Naive thymus-derived CD8-positive, alpha-beta T cell (primary cell): ENCODE measurements at regions of chr6 and their contacts with region 1.

Region 1: GRCh38 chr6:30541515-30542403 is 14.5 kb downstream of the GNL1 start:
- DNase-seq: peak; percentile 64 to 90 (median 79)
- ATAC-seq: peak; percentile 72 to 78
- H3K4me3 Mint-ChIP-seq: peak overlapping the region; percentile 78 to 95 (median 90)
- H3K27ac Mint-ChIP-seq: peak overlapping the region; percentile 82 to 97 (median 93)
- H3K4me1 Mint-ChIP-seq: peaks cover 27 to 36% (median 32%) of the 10 kb centered on the region in 4 donors
- H3K27me3 Mint-ChIP-seq: no peaks in the 10 kb centered on the region

Region 2: GRCh38 chr6:30463651-30464618 is 77.8 kb before region 1 on chr6:
- POLR2A ChIA-PET with region 1: interaction called, 10 read pairs
- DNase-seq: peak in 8 of 10 donors; percentile 31 to 69 (median 52)
- ATAC-seq: peak; percentile 52 to 61
- H3K4me3 Mint-ChIP-seq: peak overlapping the region in 9 of 10 donors; percentile 6 to 91 (median 49)
- H3K27ac Mint-ChIP-seq: no peak overlapping the region
- H3K4me1 Mint-ChIP-seq: peaks cover 16 to 54% (median 44%) of the 10 kb centered on the region in 4 donors
- H3K27me3 Mint-ChIP-seq: peaks cover 62 to 95% (median 72%) of the 10 kb centered on the region in 5 donors

Region 3: DNA sequence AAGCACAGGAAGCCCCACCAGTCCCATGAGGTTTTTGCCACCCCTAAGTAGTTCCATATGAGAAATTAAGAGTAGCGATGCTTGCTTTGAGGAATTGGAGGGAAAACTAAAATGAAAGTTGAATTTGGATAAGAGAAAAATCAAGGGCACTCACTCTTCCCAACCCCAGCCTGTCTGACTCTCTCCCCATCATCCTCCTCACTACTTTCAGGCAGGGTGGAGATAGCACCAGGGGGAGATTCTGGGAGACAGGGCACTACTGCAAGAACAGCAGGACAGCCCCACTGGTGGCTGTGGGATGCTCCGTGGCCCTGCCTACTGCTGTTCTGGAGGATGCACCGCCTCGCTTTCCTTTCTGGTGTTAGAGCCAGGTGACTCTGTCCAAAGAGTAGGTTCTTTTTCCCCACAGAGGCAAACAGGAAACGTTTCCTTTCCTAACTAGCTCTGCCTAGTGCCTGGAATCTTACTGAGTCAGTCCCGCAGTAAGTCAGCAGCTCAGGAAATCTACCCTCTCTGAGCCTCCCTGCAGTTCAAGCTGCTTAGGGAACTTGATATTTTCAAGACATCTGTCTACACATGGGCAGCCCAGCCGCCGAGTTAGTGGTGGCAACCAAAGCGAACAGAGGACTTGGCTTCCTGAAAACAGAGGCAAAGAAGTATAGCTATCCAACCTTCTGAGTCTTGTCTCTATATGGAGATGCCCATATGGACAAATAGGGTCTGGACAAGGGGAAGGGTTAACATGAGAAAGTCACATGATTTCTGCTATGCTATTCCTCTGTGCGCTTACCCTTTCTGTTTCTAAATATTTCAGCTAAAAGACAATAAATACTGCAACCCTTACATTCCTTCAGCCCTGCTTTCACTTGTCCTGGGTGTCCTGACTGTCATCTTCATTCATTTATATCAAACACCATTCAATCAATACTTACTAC is 41.1 kb before region 1 on chr6:
- POLR2A ChIA-PET with region 1: interaction called, 211 read pairs
- DNase-seq: no peak
- ATAC-seq: peak; percentile 67 to 81
- H3K4me3 Mint-ChIP-seq: peak overlapping the region; percentile 73 to 89 (median 82)
- H3K27ac Mint-ChIP-seq: peak overlapping the region in 9 of 10 donors; percentile 73 to 91 (median 89)
- H3K4me1 Mint-ChIP-seq: peaks cover 28 to 53% (median 47%) of the 10 kb centered on the region in 4 donors
- H3K27me3 Mint-ChIP-seq: no peaks in the 10 kb centered on the region

Region 4: DNA sequence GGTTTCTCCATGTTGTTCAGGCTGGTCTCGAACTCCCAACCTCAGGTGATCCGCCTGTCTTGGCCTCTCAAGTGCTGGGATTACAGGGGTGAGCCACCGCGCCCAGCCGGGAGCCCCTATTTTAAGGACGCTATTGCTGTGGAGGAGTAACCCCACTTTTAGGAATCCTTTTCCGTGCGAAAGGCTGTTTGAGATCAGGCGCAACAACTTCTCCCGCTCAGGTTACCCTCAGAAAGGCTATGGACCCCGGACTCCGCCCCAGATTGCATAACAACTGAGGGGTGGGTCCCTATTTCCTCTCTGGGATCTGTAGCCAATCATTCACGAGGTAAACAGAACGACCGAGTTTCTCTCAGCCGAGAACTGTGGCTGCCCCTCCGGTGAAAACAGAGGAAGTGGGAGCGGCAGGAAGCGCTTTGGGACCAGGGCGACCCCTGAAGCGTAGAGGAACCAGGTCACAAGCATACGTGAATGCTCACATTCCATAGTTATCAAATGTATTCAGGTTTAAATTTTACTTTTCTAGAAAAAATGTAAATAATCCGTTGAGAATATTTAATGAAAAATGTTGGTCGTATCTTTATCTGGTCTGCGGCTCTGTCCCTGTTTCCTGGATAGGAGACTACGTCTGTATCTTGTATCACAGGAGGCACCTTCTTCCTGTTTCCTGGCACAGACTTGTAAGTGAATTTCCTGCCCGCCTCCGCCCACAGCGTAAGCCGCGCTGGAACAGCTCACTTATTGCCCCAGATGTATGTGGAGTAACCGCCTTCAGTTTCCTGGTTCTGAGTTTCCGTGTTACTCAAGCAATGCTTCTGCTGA is 25.6 kb before region 1 on chr6:
- POLR2A ChIA-PET with region 1: interaction called, 33 read pairs
- DNase-seq: peak; percentile 71 to 97 (median 91)
- ATAC-seq: peak; percentile 84 to 85
- H3K4me3 Mint-ChIP-seq: peak overlapping the region; percentile 70 to 94 (median 90)
- H3K27ac Mint-ChIP-seq: peak overlapping the region; percentile 96 to 100 (median 99)
- H3K4me1 Mint-ChIP-seq: peaks cover 18 to 80% (median 66%) of the 10 kb centered on the region in 4 donors
- H3K27me3 Mint-ChIP-seq: no peaks in the 10 kb centered on the region

Region 5: GRCh38 chr6:30556066-30556905 is 14.5 kb after region 1 on chr6 and contains the start of gene GNL1:
- POLR2A ChIA-PET with region 1: interaction called, 80 read pairs
- DNase-seq: peak; percentile 97 to 100 (median 99)
- ATAC-seq: peak; percentile 86 to 87
- H3K4me3 Mint-ChIP-seq: peak within 1 kb of the TSS; percentile 87 to 100 (median 99)
- H3K27ac Mint-ChIP-seq: peak within 1 kb of the TSS; percentile 98 to 100 (median 100)
- H3K4me1 Mint-ChIP-seq: peaks cover 25 to 70% (median 56%) of the 10 kb centered on the region in 4 donors
- H3K27me3 Mint-ChIP-seq: peaks cover 0 to 2% (median 0%) of the 10 kb centered on the region in 5 donors
- polyA plus RNA-seq, gene GNL1: 24.7 to 34.1 (median 28.7) TPM

Region 6: DNA sequence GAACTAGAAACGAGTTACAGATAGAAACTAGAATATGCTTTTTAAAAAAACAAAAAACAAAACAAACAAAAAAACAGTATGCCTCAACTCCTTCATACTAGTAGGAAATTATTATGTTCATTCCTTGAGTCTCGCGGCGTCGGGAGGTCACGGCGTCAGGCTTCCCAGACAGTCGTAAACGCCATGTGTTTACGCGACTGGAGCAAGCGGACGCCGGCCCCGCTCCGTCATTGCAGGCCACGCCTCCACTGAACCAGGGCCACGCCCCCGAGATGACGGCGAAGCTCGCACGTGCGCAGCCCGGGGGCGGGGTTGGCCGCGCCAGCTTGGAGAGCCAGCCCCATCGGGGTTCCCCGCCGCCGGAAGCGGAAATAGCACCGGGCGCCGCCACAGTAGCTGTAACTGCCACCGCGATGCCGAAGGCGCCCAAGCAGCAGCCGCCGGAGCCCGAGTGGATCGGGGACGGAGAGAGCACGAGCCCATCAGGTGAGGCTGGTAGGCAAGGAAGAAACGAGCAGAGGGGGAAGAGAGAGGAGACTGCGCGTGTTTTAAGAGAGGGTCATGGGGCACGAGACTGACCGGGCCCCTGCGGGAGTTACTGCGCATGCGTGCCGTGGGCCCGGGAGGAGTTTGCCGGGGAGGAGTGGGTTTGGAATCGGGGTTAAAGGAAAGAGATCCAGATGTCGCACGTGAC is 29.5 kb after region 1 on chr6 and contains the start of gene ABCF1:
- POLR2A ChIA-PET with region 1: interaction called, 19 read pairs
- DNase-seq: peak; percentile 98 to 100 (median 99)
- ATAC-seq: peak; percentile 94
- H3K4me3 Mint-ChIP-seq: peak within 1 kb of the TSS; percentile 91 to 100 (median 100)
- H3K27ac Mint-ChIP-seq: peak within 1 kb of the TSS; percentile 98 to 100 (median 99)
- H3K4me1 Mint-ChIP-seq: peaks cover 45 to 67% (median 62%) of the 10 kb centered on the region in 4 donors
- H3K27me3 Mint-ChIP-seq: no peaks in the 10 kb centered on the region
- polyA plus RNA-seq, gene ABCF1: 19.1 to 43.1 (median 30.5) TPM

Region 7: DNA sequence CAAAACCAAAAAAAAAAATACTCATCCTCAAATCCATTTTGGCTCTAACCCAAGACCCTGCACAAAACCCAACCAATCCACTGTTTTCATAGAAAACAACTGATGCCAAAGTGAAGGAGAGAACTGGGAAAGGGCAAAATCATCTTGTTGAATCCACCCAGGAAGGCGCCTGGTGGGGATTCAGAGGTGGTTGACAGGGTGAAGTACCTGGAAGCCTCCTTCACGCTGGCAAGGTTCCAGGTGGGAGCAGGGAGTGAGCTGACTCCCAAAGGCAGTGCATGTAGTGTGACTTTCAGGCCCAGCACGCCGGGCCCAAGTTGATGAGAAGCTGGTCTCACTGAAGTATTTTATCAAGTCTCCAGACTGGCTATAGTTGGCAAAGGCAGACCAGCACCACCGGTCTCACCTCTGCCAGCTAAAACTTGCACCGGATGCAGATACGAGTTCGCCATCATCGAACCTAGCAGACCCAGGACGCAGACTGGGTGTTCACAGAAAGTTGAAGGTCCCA is 58.7 kb after region 1 on chr6:
- POLR2A ChIA-PET with region 1: interaction called, 56 read pairs
- DNase-seq: no peak
- ATAC-seq: no peak
- H3K4me3 Mint-ChIP-seq: no peak overlapping the region
- H3K27ac Mint-ChIP-seq: peak overlapping the region; percentile 52 to 91 (median 76)
- H3K4me1 Mint-ChIP-seq: peaks cover 20 to 40% (median 33%) of the 10 kb centered on the region in 4 donors
- H3K27me3 Mint-ChIP-seq: no peaks in the 10 kb centered on the region

Region 8: GRCh38 chr6:30707281-30707872 is 165.6 kb after region 1 on chr6:
- POLR2A ChIA-PET with region 1: no interaction called
- DNase-seq: peak in 1 of 10 donors; percentile 46
- ATAC-seq: no peak
- H3K4me3 Mint-ChIP-seq: no peak overlapping the region
- H3K27ac Mint-ChIP-seq: peak overlapping the region in 2 of 10 donors; percentile 26 to 73
- H3K4me1 Mint-ChIP-seq: peaks cover 9 to 28% (median 16%) of the 10 kb centered on the region in 4 donors
- H3K27me3 Mint-ChIP-seq: no peaks in the 10 kb centered on the region

Region 9: DNA sequence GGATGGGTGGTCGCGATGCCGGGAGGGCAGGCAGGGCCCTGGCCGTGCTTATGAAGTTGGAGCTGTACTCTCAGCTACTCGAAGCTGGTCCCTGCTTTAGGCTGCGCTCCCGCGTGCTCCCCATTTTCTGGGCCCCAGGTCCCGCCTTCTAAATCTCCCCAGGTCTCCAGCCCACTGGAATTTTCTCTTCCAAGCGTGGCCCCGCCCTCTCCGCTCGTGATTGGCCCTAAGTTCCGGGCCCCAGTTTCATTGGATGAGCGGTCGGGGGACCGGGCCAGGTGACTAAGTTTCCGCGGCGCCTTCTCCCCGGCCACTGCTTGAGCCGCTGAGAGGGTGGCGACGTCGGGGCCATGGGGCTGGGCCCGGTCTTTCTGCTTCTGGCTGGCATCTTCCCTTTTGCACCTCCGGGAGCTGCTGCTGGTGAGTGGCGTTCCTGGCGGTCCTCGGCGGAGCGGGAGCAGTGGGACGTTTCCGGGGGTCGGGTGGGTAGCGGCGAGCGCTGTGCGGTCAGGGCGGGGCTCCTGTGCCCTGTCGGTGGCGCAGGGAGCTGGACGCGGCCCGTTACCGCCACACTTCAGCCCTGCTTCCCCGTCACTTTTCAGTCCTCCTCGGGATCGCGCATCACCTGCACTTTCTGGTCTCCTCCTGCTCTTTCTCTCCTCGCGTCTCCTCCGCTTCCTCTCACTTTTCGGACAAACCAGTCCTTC is 861.7 kb after region 1 on chr6 and contains the start of gene MICA:
- POLR2A ChIA-PET with region 1: no interaction called
- DNase-seq: peak in 9 of 10 donors; percentile 39 to 80 (median 50)
- ATAC-seq: peak; percentile 44 to 64
- H3K4me3 Mint-ChIP-seq: peak within 1 kb of the TSS; percentile 85 to 98 (median 94)
- H3K27ac Mint-ChIP-seq: peak within 1 kb of the TSS; percentile 77 to 98 (median 92)
- H3K4me1 Mint-ChIP-seq: peaks cover 52 to 90% (median 78%) of the 10 kb centered on the region in 4 donors
- H3K27me3 Mint-ChIP-seq: no peaks in the 10 kb centered on the region
- polyA plus RNA-seq, gene MICA: 3.7 to 5.8 (median 5.5) TPM